CD14-positive monocyte (primary cell): ENCODE measurements at regions of chr6 and their contacts with region 1.

Region 1: GRCh38 chr6:109304284-109305015 is 77.8 kb downstream of the CD164 start:
- DNase-seq: peak; percentile 10 to 25 (median 16)
- H3K4me3 ChIP-seq: no peak overlapping the region
- H3K4me3 Mint-ChIP-seq: peak overlapping the region in 1 of 2 donors; percentile 4
- H3K27ac ChIP-seq: no peak overlapping the region
- H3K27ac Mint-ChIP-seq: peak overlapping the region in 5 of 7 donors; percentile 9 to 50 (median 46)
- H3K4me1 ChIP-seq: peaks cover 25 to 27% of the 10 kb centered on the region in 2 donors
- H3K4me1 Mint-ChIP-seq: peaks cover 39% of the 10 kb centered on the region
- H3K27me3 ChIP-seq: no peaks in the 10 kb centered on the region
- H3K27me3 Mint-ChIP-seq: peaks cover 0 to 7% (median 0%) of the 10 kb centered on the region in 3 donors
- CTCF ChIP-seq: no peak

Region 2: DNA sequence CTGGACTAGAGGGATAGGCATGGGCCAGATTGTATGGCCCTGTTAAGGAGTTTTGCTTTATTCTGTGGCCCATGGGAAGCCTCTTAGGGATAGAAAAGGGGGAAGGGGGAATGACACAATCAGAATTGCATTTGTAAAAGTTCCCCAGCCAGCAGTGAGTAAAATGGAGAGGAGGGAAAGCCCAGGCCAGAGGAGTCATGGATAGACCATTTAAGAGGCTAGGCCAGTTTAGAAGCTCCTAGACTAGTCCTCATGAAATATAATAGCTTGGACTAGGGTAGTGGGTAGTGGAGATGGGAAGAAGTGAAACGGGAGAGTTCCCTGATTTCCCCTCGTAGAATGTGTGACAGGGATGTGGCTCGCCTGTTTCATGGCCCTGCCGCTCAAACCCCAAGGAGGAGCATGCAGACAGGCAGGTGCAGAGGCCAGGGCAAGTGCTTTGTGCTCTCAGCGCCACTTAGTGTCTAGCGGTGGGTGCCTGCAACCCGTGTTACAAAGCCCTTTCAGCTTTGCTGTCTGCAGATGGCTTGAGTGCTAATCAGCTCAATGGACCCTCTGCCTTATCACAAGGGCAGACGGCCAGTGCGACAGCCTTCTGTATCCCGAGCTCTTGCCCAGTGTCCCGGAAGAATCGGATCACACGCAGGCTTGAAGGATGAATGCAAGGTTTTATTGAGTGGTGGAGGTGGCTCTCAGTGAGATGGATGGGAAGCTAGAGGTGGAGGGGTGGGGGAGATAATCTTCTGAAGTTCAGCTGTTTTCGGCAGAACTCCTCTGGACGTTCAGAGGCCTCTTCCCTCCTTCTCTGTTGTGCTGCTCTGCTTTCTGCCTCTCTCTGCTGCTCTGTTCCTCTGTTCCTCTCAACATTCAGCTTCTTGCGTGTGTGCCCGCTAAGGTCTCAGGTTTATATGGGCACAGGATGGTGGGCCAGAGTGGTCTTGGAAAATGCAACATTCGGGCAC is 68.1 kb before region 1 on chr6:
- intact Hi-C with region 1: loop called in 1 of 2 experiments (anchors 5 kb)
- DNase-seq: peak; percentile 27 to 88 (median 58)
- H3K4me3 ChIP-seq: peak overlapping the region in 1 of 3 experiments; percentile 56
- H3K4me3 Mint-ChIP-seq: peak overlapping the region; percentile 62 to 79
- H3K27ac ChIP-seq: peak overlapping the region; percentile 92 to 96
- H3K27ac Mint-ChIP-seq: peak overlapping the region; percentile 96 to 99 (median 99)
- H3K4me1 ChIP-seq: peaks cover 59 to 66% of the 10 kb centered on the region in 2 donors
- H3K4me1 Mint-ChIP-seq: peaks cover 59% of the 10 kb centered on the region
- H3K27me3 ChIP-seq: no peaks in the 10 kb centered on the region
- H3K27me3 Mint-ChIP-seq: peaks cover 0 to 2% (median 0%) of the 10 kb centered on the region in 3 donors
- CTCF ChIP-seq: no peak

Region 3: DNA sequence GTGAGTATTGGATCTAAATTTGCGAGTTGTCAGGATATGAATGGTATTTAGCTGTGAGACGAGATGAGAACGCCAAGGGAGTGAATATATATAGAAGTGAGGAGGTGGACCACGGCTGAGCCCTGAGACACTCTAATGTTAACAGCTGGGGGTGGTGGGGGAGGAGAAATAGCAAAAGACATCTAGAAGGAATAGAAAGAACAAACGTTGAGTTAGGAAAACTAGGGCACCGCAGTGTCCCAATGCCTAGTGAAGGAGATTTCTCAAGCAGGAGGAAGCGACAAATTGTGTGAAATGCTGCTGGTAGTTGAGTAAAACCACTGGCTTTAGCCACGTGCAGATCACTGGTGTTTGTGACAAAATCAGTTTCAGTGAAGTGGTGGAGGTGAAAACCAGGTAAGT is 21.0 kb after region 1 on chr6:
- intact Hi-C with region 1: loop called in 1 of 2 experiments (anchors 2 kb)
- DNase-seq: peak; percentile 5 to 60 (median 21)
- H3K4me3 ChIP-seq: peak overlapping the region in 1 of 3 experiments; percentile 24
- H3K4me3 Mint-ChIP-seq: no peak overlapping the region
- H3K27ac ChIP-seq: peak overlapping the region in 1 of 2 donors; percentile 33
- H3K27ac Mint-ChIP-seq: no peak overlapping the region
- H3K4me1 ChIP-seq: peaks cover 47% of the 10 kb centered on the region in 2 donors
- H3K4me1 Mint-ChIP-seq: peaks cover 29% of the 10 kb centered on the region
- H3K27me3 ChIP-seq: no peaks in the 10 kb centered on the region
- H3K27me3 Mint-ChIP-seq: peaks cover 0 to 2% (median 0%) of the 10 kb centered on the region in 3 donors
- CTCF ChIP-seq: no peak